ENCODE measurements at regions of chr16 and their contacts with region 1.

Region 1: GRCh38 chr16:1363501-1364041 is 11.8 kb downstream of the GNPTG start:
- DNase-seq: peak; percentile 43 to 88
- H3K4me3 ChIP-seq: no peak overlapping the region
- H3K27ac ChIP-seq: no peak overlapping the region
- H3K4me1 ChIP-seq: no peaks in the 10 kb centered on the region
- H3K27me3 ChIP-seq: no peaks in the 10 kb centered on the region
- CTCF ChIP-seq: peak; percentile 78 to 93 (median 92)
- EP300 ChIP-seq: no peak
- POLR2A ChIP-seq: no peak
- RAD21 ChIP-seq: peak; percentile 58 to 71

Region 2: GRCh38 chr16:1351582-1352362 is 11.8 kb before region 1 on chr16 and contains the starts of genes GNPTG and TSR3:
- CTCF ChIA-PET with region 1: interaction called, 32 read pairs
- POLR2A ChIA-PET with region 1: interaction called, 8 read pairs
- DNase-seq: peak; percentile 53 to 89
- H3K4me3 ChIP-seq: peak within 1 kb of the TSS; percentile 74 to 97 (median 88)
- H3K27ac ChIP-seq: peak within 1 kb of the TSS; percentile 68; the same call in 1 of the 2 replicates
- H3K4me1 ChIP-seq: peaks cover 0 to 7% (median 4%) of the 10 kb centered on the region in 4 experiments; a peak in 3 of 7 replicates
- H3K27me3 ChIP-seq: no peaks in the 10 kb centered on the region; a peak in 1 of 7 replicates
- CTCF ChIP-seq: no peak
- EP300 ChIP-seq: peak in 1 of 2 experiments; percentile 93; a peak in 2 of 3 replicates
- POLR2A ChIP-seq: peak in 1 of 2 experiments; percentile 87; a peak in 2 of 3 replicates
- RAD21 ChIP-seq: peak in 1 of 2 experiments; percentile 25; a peak in 1 of 4 replicates
- total RNA-seq, gene GNPTG: 25.2 and 26.2 TPM in 2 replicates
- total RNA-seq, gene TSR3: 45.9 and 52.3 TPM in 2 replicates

Region 3: DNA sequence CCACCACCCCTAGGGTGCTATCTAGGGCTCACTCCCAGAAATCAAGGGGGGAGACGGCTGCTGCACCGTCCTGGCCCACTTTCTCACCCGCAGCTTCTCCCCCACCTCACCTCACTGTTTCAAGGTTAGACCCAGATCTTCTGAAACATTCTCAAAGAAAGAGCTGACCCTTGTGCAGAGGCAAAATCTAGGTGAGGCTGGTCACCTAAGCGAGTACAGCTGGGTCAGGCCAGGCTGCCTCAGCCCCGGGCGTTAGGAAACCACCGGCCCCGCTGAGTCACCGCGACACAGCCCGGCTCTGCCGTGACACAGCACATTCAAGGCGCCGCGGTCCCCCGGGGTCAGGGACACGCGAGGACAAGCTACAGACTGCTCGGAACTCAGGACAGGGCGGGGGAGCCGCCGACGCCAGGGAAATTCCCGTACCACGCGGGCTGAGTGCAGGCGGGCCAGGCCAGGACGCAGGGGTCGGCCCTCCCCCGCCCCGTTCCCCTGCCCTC is 15.3 kb after region 1 on chr16:
- CTCF ChIA-PET with region 1: interaction called, 59 read pairs
- POLR2A ChIA-PET with region 1: interaction called, 44 read pairs
- DNase-seq: no peak
- H3K4me3 ChIP-seq: peak overlapping the region; percentile 63 to 73 (median 70)
- H3K27ac ChIP-seq: peak overlapping the region; percentile 86; the same call in 1 of the 2 replicates
- H3K4me1 ChIP-seq: peaks cover 0 to 16% (median 10%) of the 10 kb centered on the region in 4 experiments; a peak in 5 of 7 replicates
- H3K27me3 ChIP-seq: no peaks in the 10 kb centered on the region
- CTCF ChIP-seq: no peak
- EP300 ChIP-seq: no peak
- POLR2A ChIP-seq: no peak
- RAD21 ChIP-seq: no peak

Region 4: GRCh38 chr16:1385232-1385631 is 21.7 kb after region 1 on chr16:
- CTCF ChIA-PET with region 1: interaction called, 59 read pairs
- POLR2A ChIA-PET with region 1: interaction called, 44 read pairs
- DNase-seq: no peak
- H3K4me3 ChIP-seq: no peak overlapping the region
- H3K27ac ChIP-seq: no peak overlapping the region
- H3K4me1 ChIP-seq: peaks cover 0 to 1% (median under 1%) of the 10 kb centered on the region in 4 experiments; a peak in 4 of 7 replicates
- H3K27me3 ChIP-seq: no peaks in the 10 kb centered on the region
- CTCF ChIP-seq: no peak
- EP300 ChIP-seq: no peak
- POLR2A ChIP-seq: no peak
- RAD21 ChIP-seq: no peak

Region 5: GRCh38 chr16:1408171-1408837 is 44.7 kb after region 1 on chr16:
- CTCF ChIA-PET with region 1: interaction called, 10 read pairs
- POLR2A ChIA-PET with region 1: interaction called, 3 read pairs
- DNase-seq: peak; percentile 38 to 99
- H3K4me3 ChIP-seq: peak overlapping the region; percentile 54 to 76 (median 58)
- H3K27ac ChIP-seq: no peak overlapping the region
- H3K4me1 ChIP-seq: no peaks in the 10 kb centered on the region
- H3K27me3 ChIP-seq: no peaks in the 10 kb centered on the region
- CTCF ChIP-seq: no peak
- EP300 ChIP-seq: no peak
- POLR2A ChIP-seq: no peak
- RAD21 ChIP-seq: no peak

Region 6: DNA sequence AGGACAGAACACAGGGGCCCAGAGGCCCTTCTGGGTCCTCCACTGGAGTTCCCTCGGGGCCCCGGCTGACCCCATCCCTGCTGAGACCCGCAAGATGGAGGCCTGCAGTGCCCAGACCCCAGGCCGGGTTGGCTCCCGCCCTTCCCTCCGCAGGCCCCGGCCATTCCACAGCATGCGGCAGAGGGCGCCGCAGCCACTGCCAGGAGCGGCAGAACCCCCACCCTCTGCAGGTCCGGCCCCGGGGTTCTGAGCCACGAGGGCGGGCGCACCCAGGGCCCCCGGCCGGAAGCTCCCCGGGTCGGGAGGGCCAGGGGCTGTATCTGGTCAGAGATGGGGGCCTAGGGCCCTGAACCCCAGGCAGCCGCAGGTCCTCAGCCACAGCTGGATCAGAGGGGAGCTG is 64.9 kb after region 1 on chr16:
- CTCF ChIA-PET with region 1: interaction called, 14 read pairs
- POLR2A ChIA-PET with region 1: no interaction called
- DNase-seq: peak in 1 of 2 experiments; percentile 85
- H3K4me3 ChIP-seq: no peak overlapping the region
- H3K27ac ChIP-seq: no peak overlapping the region
- H3K4me1 ChIP-seq: no peaks in the 10 kb centered on the region; a peak in 2 of 7 replicates
- H3K27me3 ChIP-seq: no peaks in the 10 kb centered on the region
- CTCF ChIP-seq: peak; percentile 53 to 66 (median 60)
- EP300 ChIP-seq: no peak
- POLR2A ChIP-seq: no peak
- RAD21 ChIP-seq: peak; percentile 48 to 66

Region 7: DNA sequence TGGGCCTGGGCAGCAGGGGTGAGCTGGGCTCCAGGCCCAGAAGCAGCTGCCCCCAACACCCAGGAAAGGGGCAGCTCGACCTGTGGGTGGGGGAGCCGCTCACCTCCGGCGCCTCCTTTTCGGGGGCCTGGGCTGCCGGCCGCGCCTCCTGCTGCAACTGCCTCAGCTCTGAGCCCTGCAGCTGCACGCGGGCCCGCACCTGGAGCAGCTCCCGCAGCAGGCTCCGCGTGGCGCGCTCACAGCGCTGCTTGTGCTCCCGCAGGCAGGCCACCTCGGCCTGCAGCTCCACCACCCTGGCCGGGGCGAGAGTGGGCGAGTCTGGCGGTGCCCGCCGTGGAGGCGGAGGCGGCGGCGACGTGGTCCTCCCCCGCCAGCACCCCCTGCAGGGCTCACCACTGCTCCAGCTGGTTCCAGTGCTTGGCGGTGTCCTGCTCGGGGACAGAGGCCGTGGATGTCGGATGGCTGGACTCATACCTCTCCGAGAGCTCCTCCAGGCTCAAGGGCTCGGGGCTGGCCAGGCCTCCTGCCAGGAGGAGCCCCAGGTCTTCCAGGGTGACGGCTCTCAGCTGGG is 79.9 kb after region 1 on chr16:
- CTCF ChIA-PET with region 1: interaction called, 13 read pairs
- POLR2A ChIA-PET with region 1: no interaction called
- DNase-seq: no peak
- H3K4me3 ChIP-seq: no peak overlapping the region
- H3K27ac ChIP-seq: no peak overlapping the region
- H3K4me1 ChIP-seq: no peaks in the 10 kb centered on the region; a peak in 1 of 7 replicates
- H3K27me3 ChIP-seq: no peaks in the 10 kb centered on the region
- CTCF ChIP-seq: no peak
- EP300 ChIP-seq: no peak
- POLR2A ChIP-seq: no peak
- RAD21 ChIP-seq: no peak

Region 8: DNA sequence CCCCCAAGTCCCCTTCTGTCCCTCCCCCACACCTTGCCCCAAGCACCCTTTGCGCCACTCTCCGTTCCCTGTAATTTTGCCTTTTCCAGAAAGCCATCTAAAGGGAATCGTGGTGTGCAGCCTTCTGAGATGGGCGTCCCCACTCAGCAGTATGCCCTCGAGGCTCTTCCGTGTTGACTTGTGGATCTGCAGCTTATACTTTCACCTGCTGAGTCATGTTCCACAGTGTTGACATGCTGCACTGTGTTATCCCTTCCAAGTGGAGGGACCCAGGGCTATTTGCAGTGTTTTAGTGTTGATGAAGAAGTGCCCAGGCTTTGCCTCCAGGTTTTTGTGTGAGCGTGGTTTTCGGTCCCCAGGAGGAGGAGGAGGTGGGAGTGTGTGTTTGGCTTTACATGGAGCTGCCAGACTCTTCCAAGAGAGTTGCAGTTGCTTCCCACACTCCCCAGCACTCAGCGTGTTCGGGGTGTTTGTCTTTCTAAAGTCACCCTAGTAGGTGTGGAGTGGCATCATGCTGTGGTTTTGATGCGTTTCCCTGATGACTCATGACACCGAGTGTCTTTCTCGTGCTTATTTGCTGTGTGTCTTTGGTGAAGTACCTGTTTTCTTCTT is 282.4 kb after region 1 on chr16:
- CTCF ChIA-PET with region 1: no interaction called
- POLR2A ChIA-PET with region 1: no interaction called
- DNase-seq: no peak
- H3K4me3 ChIP-seq: no peak overlapping the region
- H3K27ac ChIP-seq: no peak overlapping the region
- H3K4me1 ChIP-seq: peaks cover 0 to 2% (median 0%) of the 10 kb centered on the region in 4 experiments; a peak in 1 of 7 replicates
- H3K27me3 ChIP-seq: no peaks in the 10 kb centered on the region
- CTCF ChIP-seq: no peak
- EP300 ChIP-seq: no peak
- POLR2A ChIP-seq: no peak
- RAD21 ChIP-seq: no peak